HEK293T (cell line): ENCODE measurements at regions of chr5 and their contacts with region 1.

Region 1: GRCh38 chr5:17400724-17401464 is 97.1 kb upstream of the TAF11L2 start:
- DNase-seq: no peak

Region 2: GRCh38 chr5:17118631-17119030 is 282.3 kb before region 1 on chr5:
- CTCF ChIA-PET with region 1: no interaction called
- POLR2A ChIA-PET with region 1: no interaction called
- DNase-seq: peak; percentile 35

Region 3: DNA sequence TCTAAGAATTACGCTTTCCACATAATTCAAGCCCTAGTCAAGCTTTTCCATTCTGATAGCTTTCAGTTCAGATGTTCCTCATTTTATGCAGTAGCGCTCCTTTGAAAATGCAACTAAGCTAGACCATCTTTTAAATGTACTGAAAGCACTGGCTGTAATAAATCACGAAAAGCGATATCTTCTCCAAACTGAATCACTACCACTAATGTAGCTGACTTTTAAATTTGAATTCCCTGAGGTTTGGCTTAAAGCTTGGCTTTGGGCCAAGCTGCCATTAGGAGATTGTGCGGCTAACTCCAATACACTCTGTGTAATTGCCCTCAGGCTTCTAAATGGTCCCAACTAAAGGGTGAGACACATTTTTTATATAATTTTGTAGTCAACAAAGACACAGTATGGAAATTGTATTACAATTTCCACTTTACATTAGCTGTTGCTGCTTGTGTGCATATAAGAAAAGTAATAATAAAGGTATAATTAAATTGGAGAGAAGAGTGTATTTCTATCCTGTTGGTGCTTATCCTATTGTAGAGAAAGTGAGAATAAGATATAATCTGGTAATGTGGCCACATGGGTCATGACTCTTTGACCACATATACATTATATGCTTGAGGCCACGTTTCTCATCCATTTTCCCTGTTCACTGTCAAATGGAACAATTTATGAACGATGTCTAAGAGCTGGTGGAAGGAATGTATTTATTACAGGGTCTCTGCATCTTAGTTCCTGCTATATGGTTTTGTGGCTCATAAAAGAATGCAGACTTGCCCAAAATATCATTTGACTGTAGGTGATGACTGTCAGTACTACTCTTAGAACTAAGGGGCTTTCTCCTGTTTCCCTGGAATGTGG is 21.6 kb before region 1 on chr5:
- CTCF ChIA-PET with region 1: interaction called, 14 read pairs
- POLR2A ChIA-PET with region 1: interaction called, 3 read pairs
- DNase-seq: peak; percentile 63

Region 4: DNA sequence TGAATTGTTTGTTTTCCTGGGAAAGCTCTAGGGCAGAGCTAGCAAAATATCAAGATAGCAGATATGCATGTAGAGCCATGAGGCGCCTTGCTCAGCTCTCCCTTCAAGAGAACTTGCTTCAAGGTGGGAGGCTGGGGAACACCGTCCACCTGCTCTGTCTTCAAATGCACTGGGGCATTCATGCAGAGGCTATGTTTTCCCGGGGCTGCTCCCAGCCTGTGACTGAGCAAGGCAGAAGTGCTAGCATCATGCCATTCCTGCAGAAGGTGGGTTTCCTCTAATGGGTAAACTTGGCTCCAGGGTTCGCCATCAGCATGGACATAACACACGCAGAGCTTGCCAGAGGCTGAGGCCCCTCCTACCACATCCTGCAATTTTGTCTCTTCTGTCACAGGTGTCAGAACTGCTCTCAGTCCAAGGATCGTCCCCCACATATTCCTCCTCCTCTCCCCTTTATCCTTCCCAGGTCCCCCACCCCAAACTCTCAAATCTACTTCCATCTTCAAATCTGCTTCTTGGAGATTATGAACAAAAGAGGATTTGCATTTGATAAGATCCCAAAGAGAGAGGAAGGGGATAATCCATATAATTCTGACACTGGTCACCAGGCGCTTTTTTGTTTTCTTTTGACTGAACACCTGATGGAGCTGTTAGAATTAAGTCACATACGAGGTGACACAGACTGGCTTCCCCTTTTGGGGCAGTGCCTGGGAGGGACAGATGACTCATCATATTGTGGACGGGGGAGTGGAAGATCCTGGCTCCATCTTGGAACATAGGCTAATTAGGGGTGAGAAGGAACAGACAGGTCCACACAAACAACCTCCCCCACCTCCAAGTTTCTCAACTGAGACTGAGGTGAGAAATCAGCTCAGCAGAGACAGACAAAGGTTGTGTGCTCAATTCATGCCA is 12.1 kb after region 1 on chr5:
- CTCF ChIA-PET with region 1: interaction called, 4 read pairs
- POLR2A ChIA-PET with region 1: interaction called, 15 read pairs
- DNase-seq: no peak